GM12878 (cell line): ENCODE measurements at regions of chr6 and their contacts with region 1.

Region 1: DNA sequence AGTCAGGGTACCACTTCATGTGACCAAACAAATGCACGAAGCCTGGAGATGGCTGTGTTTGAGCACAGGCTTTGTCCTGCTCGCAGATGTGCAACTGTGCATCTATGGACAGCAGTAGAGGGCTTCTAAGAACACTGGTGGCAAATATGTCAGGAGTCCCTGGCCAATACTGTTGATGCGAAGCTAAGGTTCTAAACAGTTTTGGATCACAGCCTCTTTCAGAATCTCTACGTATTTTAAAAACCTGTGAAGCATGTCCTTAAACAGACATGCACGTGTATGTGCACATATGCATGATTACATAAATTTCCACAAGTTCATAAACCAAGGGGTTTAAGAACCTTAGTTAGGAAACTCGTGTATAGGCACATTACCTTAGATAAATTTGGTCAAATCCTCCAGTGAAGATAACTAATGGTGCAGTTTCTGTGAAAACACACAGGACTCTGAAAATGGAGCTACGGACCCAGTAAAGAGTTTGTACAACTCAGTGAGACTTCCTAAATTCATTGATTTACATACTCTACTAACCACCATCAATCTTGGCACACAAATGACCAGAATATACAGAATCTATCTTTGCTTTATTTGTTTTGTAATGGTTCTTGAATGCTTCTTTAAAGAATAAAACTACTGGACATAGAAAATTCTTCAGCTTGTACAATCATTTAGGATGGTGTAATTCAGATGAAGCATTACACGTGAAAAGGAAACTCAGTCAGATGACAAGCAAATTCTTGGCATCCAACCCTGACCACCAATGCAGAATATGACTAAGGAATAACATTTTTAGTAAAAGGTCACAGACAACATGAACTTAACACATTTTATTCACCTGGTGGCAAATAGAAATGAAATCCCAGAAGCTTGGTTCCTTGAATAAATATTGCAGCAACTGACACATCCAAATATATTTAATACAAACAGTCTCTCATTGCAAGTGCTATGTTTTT is 27.4 kb downstream of the KCNQ5 start:
- DNase-seq: peak; percentile 58
- ATAC-seq: peak; percentile 71
- H3K4me3 ChIP-seq: peak overlapping the region; percentile 4; the same call in 1 of the 2 replicates
- H3K27ac ChIP-seq: peak overlapping the region; percentile 77
- H3K4me1 ChIP-seq: peaks cover 25% of the 10 kb centered on the region
- H3K27me3 ChIP-seq: no peaks in the 10 kb centered on the region
- CTCF ChIP-seq: no peak
- EP300 ChIP-seq: peak; percentile 66 to 82; a peak in 3 of 4 replicates
- POLR2A ChIP-seq: 0 out of 2 replicates have a peak, but pooled peaks have one; percentile 25
- RAD21 ChIP-seq: no peak

Region 2: DNA sequence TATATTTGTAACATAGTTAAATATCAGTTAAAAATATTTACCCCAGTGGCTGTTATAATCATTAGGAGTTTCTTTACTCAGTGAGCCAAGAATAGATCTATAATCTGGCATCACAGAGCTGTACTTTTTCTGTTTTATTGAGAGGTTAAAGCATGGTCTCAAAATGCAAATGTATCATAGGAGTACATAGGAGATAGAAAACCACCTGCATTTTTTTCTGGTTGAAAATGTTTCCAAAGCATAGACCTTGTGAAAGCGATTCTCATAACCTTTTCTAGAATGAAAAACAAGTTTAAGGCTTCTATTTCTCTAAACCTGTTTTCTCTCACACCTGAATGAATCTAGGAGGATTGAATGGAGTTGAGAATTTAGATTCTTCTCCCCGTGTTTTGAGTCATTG is 13.1 kb before region 1 on chr6:
- CTCF ChIA-PET with region 1: interaction called, 18 read pairs
- POLR2A ChIA-PET with region 1: interaction called, 10 read pairs
- RAD21 ChIA-PET with region 1: interaction called, 13 read pairs
- SMC1A ChIA-PET with region 1: interaction called, 20 read pairs
- in situ Hi-C with region 1: no loop called
- intact Hi-C with region 1: no loop called
- DNase-seq: peak; percentile 60
- ATAC-seq: peak; percentile 83
- H3K4me3 ChIP-seq: peak overlapping the region; percentile 1; the same call in 1 of the 2 replicates
- H3K27ac ChIP-seq: peak overlapping the region; percentile 21
- H3K4me1 ChIP-seq: peaks cover 14% of the 10 kb centered on the region
- H3K27me3 ChIP-seq: no peaks in the 10 kb centered on the region
- CTCF ChIP-seq: no peak
- EP300 ChIP-seq: peak in 1 of 2 experiments; percentile 43; a peak in 1 of 4 replicates
- POLR2A ChIP-seq: no peak
- RAD21 ChIP-seq: no peak

Region 3: GRCh38 chr6:72659754-72660153 is 10.4 kb after region 1 on chr6:
- CTCF ChIA-PET with region 1: interaction called, 3 read pairs
- POLR2A ChIA-PET with region 1: no interaction called
- RAD21 ChIA-PET with region 1: interaction called, 4 read pairs
- SMC1A ChIA-PET with region 1: interaction called, 12 read pairs
- in situ Hi-C with region 1: no loop called
- intact Hi-C with region 1: no loop called
- DNase-seq: no peak
- ATAC-seq: no peak
- H3K4me3 ChIP-seq: no peak overlapping the region
- H3K27ac ChIP-seq: no peak overlapping the region
- H3K4me1 ChIP-seq: no peaks in the 10 kb centered on the region
- H3K27me3 ChIP-seq: no peaks in the 10 kb centered on the region
- CTCF ChIP-seq: no peak
- EP300 ChIP-seq: no peak
- POLR2A ChIP-seq: no peak
- RAD21 ChIP-seq: no peak

Region 4: DNA sequence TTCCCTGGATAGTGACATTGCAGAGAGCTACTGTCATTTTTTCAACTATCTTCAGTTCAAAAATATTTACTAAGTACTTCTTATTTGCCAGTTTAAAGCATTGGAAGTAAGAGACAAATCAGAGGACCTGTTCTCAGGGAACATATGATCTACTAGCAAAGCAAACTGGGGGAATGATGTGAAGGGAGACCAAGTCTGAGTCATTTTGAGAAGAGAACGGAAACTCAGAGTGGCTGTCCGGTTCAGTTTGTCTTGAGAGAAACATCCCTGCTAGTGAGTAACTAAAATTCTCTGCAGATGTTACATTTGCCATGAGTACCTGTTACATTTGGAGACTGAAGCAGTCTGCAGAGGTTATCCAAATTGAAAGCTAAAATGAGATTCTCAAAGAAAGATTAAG is 90.8 kb after region 1 on chr6:
- CTCF ChIA-PET with region 1: no interaction called
- POLR2A ChIA-PET with region 1: no interaction called
- RAD21 ChIA-PET with region 1: interaction called, 3 read pairs
- SMC1A ChIA-PET with region 1: interaction called, 5 read pairs
- in situ Hi-C with region 1: no loop called
- intact Hi-C with region 1: loop called (anchors 5 kb)
- DNase-seq: peak; percentile 90
- ATAC-seq: peak; percentile 94
- H3K4me3 ChIP-seq: peak overlapping the region; percentile 50; the same call in 1 of the 2 replicates
- H3K27ac ChIP-seq: peak overlapping the region; percentile 82
- H3K4me1 ChIP-seq: peaks cover 24% of the 10 kb centered on the region
- H3K27me3 ChIP-seq: no peaks in the 10 kb centered on the region
- CTCF ChIP-seq: no peak
- EP300 ChIP-seq: peak; percentile 79 to 94
- POLR2A ChIP-seq: no peak
- RAD21 ChIP-seq: 0 out of 2 replicates have a peak, but pooled peaks have one; percentile 14